ENCODE measurements at regions of chr9 and their contacts with region 1.

Region 1: DNA sequence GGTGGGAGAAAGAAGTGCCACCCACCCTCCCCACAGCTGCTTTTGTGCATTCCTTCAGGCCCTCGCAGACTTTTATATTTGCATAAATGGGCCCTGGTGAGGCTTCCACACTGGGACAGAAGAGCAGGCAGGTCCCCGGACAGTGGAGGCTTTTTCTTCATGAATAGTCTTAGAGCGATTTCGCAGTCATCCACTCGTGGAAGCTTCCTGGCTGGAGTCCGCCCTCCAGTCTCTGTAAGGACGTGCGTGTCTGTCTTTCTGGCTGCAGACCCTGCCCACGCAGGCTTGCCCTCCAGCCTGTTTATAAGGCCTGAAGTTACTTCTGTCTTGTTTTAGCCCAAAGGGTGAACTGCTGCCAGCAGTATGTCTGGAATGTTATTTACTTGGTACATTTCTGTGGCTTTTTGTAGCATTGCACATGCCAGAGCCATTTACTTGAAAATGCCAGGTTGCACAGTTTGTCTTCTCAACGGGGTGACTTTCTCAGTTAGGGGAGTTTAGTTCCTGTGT is 195.7 kb downstream of the AOPEP start:
- DNase-seq: peak in 1 of 2 donors; percentile 93
- H3K4me3 ChIP-seq: peak overlapping the region in 1 of 2 donors; percentile 45
- H3K27ac ChIP-seq: peak overlapping the region; percentile 91 to 97
- H3K4me1 ChIP-seq: peaks cover 9 to 59% of the 10 kb centered on the region in 2 donors
- H3K27me3 ChIP-seq: no peaks in the 10 kb centered on the region
- CTCF ChIP-seq: no peak

Region 2: GRCh38 chr9:94945197-94946144 is 23.3 kb after region 1 on chr9:
- intact Hi-C with region 1: loop called (anchors 1 kb)
- DNase-seq: peak in 1 of 2 donors; percentile 87
- H3K4me3 ChIP-seq: no peak overlapping the region
- H3K27ac ChIP-seq: peak overlapping the region; percentile 65 to 81
- H3K4me1 ChIP-seq: peaks cover 13 to 51% of the 10 kb centered on the region in 2 donors
- H3K27me3 ChIP-seq: no peaks in the 10 kb centered on the region
- CTCF ChIP-seq: no peak

Region 3: GRCh38 chr9:94996641-94997040 is 74.5 kb after region 1 on chr9:
- intact Hi-C with region 1: loop called (anchors 2 kb)
- DNase-seq: no peak
- H3K4me3 ChIP-seq: no peak overlapping the region
- H3K27ac ChIP-seq: peak overlapping the region; percentile 83 to 100
- H3K4me1 ChIP-seq: peaks cover 2 to 53% of the 10 kb centered on the region in 2 donors
- H3K27me3 ChIP-seq: no peaks in the 10 kb centered on the region
- CTCF ChIP-seq: no peak

Region 4: DNA sequence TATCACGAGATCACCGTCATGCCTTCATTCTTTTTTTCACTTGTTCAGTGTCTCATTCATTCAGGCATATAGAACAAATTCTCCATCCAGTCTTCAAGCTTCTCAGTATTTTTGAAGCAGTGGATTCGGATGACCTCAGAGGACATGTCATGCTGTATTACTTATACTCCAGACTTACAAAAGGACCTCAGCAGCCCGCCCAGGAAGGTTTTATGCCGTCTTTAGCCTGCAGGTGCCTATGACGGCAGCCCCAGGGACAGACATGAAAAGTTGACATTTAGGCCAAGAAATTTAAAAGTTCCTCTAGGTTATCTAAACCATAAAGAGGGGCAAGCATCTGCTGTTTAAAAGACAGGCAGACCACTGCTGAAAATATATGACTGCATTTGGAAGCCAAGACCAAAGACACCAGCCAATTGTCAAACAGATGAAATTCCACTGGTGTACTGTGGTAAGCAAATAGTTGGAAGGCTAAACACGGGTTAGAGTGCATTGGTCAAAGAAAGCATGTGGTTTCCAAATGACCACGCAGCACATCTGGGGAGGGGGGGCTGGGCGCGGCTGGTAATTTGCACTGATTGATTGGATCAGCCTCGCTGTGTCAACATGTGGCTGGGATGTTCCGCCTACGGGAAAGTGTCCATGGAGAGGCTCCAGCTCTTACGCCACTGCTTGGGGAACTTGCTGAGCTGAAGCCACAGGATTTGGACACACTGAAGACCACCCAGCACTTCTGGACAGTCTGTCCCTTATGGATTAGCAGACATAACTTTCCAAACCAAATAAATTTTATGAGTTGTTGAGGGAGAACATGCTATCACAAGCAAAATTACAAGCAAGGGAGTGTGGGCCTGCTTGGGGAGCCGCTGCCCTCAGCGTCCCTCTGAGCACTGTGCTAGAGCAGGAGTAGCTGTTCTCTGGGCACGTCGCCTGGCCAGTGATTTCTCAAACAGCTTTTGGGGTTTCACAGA is 221.7 kb after region 1 on chr9:
- intact Hi-C with region 1: no loop called
- DNase-seq: peak in 1 of 2 donors; percentile 87
- H3K4me3 ChIP-seq: no peak overlapping the region
- H3K27ac ChIP-seq: peak overlapping the region in 1 of 2 donors; percentile 12
- H3K4me1 ChIP-seq: no peaks in the 10 kb centered on the region
- H3K27me3 ChIP-seq: no peaks in the 10 kb centered on the region
- CTCF ChIP-seq: no peak